ENCODE measurements at regions of chr13 and their contacts with region 1.

Region 1: GRCh38 chr13:113947321-113948033 is 26.4 kb downstream of the C13orf46 start:
- DNase-seq: peak; percentile 72
- ATAC-seq: peak; percentile 50

Region 2: DNA sequence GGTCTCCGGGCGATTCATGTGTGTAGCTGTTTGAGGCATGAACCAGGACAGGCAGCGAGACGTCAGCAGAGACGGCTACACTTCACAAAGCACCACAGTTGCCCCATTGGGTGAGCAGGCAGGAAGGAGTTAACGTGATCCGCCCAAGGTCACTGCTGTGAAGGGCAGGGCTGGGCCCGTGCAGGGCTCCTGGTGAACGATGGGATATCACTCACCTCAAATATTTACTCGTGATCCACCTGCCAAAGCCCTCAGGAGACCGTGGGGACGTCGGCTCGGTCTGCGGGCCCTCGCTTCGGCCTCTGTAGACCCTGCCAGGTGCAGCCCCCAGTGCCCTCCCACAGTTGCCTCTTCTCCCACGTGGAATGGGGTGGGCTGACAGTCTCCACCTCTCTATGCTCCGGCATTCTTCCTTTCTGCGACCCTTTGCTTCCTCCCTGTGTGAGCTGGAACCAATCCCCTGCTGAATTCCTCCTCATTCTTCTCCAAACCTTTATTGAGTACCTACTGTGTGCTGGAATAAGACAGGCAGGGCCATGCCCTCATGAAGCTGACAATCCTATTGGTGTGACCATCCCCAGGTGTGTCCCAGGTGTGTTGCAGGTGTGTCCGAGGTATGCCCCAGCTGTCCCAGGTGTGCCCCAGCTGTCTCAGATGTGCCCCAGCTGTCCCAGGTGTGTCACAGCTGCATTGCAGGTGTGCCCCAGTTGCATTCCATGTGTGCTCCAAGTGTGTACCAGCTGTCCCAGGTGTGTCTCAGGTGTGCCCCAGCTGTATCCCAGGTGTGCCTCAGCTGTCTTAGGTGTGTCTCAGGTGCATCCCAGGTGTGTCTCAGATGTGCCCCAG is 282.5 kb before region 1 on chr13:
- intact Hi-C with region 1: no loop called
- DNase-seq: no peak
- ATAC-seq: no peak

Region 3: GRCh38 chr13:113816946-113817859 is 130.3 kb before region 1 on chr13:
- intact Hi-C with region 1: no loop called
- DNase-seq: peak; percentile 92
- ATAC-seq: peak; percentile 52

Region 4: GRCh38 chr13:114043421-114044053 is 96.1 kb after region 1 on chr13:
- intact Hi-C with region 1: no loop called
- DNase-seq: peak; percentile 81
- ATAC-seq: peak; percentile 94

Region 5: GRCh38 chr13:114226699-114227323 is 279.3 kb after region 1 on chr13:
- intact Hi-C with region 1: loop called (anchors 5 kb)
- DNase-seq: peak; percentile 87
- ATAC-seq: peak; percentile 87